WTC11 (cell line): ENCODE measurements at regions of chr11 and their contacts with region 1.

Region 1: GRCh38 chr11:75450826-75451821 is 18.1 kb upstream of the KLHL35 start:
- DNase-seq: peak; percentile 90
- ATAC-seq: peak; percentile 87
- H3K4me3 Mint-ChIP-seq: peak overlapping the region; percentile 46
- H3K27ac Mint-ChIP-seq: no peak overlapping the region
- H3K4me1 Mint-ChIP-seq: no peaks in the 10 kb centered on the region
- H3K27me3 Mint-ChIP-seq: peaks cover 4% of the 10 kb centered on the region
- CTCF ChIP-seq: peak; percentile 94

Region 2: DNA sequence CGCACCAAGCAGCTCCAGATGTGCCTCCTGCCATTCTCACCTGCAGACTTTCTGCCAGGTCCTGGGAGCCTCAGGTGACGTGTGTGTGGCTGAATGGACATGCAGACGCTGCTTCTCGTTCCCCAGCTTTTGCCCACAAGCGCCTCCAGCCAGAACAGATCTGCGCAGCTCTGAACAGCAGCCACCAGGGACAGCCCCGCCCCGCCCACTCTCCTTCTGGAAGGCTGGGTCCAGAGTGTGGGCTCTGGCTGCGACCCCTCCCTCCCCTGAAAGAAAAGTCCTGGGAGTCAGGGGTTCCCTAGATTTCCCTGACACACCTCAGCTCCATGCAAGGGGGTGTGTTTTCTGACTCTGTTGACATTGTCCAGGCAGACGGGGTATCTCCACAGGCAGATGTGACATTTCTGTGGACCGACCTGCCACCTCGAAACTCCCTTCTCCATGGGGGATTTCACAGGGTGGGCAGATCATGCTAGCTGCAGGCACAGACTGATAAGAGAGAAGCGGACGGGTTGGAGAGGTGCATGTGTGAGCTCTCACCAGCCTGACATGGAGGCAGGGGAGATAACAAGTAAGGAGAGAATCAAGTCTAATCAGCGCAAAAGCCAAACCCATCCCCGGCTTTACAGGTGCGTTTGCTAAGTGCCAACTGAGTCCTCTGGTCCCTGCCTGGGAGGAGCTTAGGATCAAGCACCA is 280.5 kb before region 1 on chr11:
- CTCF ChIA-PET with region 1: no interaction called
- POLR2A ChIA-PET with region 1: no interaction called
- DNase-seq: no peak
- ATAC-seq: no peak
- H3K4me3 Mint-ChIP-seq: no peak overlapping the region
- H3K27ac Mint-ChIP-seq: no peak overlapping the region
- H3K4me1 Mint-ChIP-seq: peaks cover 11% of the 10 kb centered on the region
- H3K27me3 Mint-ChIP-seq: no peaks in the 10 kb centered on the region
- CTCF ChIP-seq: no peak

Region 3: GRCh38 chr11:75432164-75432525 is 19.0 kb before region 1 on chr11:
- CTCF ChIA-PET with region 1: interaction called, 24 read pairs
- POLR2A ChIA-PET with region 1: no interaction called
- DNase-seq: peak; percentile 36
- ATAC-seq: 0 out of 2 replicates have a peak, but pooled peaks have one; percentile 3
- H3K4me3 Mint-ChIP-seq: peak overlapping the region; percentile 51
- H3K27ac Mint-ChIP-seq: no peak overlapping the region
- H3K4me1 Mint-ChIP-seq: peaks cover 30% of the 10 kb centered on the region
- H3K27me3 Mint-ChIP-seq: peaks cover 63% of the 10 kb centered on the region
- CTCF ChIP-seq: no peak

Region 4: GRCh38 chr11:75468534-75469340 is 17.6 kb after region 1 on chr11:
- CTCF ChIA-PET with region 1: interaction called, 34 read pairs
- POLR2A ChIA-PET with region 1: no interaction called
- DNase-seq: no peak
- ATAC-seq: no peak
- H3K4me3 Mint-ChIP-seq: no peak overlapping the region
- H3K27ac Mint-ChIP-seq: no peak overlapping the region
- H3K4me1 Mint-ChIP-seq: peaks cover 28% of the 10 kb centered on the region
- H3K27me3 Mint-ChIP-seq: no peaks in the 10 kb centered on the region
- CTCF ChIP-seq: no peak

Region 5: DNA sequence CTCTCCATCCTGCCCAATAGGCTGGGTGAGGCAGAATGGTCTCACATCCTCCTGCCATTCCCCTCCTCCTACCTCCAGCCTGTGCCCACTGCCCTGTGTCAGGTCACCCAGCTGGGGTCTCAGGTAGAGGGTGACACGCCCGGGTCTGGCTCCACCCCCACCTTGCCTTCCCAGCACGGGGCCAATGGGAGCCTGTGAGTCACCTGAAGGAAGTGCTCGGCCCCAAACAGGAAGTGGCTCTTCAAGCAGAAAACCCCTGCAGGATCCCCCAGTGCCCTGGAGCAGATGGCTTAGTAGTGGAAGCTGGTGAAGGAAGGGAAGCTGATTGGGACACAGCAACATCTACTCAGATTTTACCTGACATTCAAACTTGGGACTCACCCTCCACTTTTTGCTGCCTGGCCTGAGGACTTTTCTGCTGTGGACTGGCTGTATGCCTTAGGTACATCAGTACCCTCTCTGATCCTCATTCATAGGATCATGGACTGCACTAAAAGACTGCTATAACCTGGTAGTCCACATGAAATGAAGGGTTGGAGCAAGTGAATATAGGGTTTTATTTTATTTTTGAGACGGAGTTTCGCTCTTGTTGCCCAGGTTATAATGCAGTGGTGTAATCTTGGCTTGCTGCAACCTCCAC is 41.2 kb after region 1 on chr11:
- CTCF ChIA-PET with region 1: interaction called, 40 read pairs
- POLR2A ChIA-PET with region 1: no interaction called
- DNase-seq: peak; percentile 32
- ATAC-seq: peak; percentile 64
- H3K4me3 Mint-ChIP-seq: no peak overlapping the region
- H3K27ac Mint-ChIP-seq: no peak overlapping the region
- H3K4me1 Mint-ChIP-seq: peaks cover 24% of the 10 kb centered on the region
- H3K27me3 Mint-ChIP-seq: no peaks in the 10 kb centered on the region
- CTCF ChIP-seq: no peak

Region 6: DNA sequence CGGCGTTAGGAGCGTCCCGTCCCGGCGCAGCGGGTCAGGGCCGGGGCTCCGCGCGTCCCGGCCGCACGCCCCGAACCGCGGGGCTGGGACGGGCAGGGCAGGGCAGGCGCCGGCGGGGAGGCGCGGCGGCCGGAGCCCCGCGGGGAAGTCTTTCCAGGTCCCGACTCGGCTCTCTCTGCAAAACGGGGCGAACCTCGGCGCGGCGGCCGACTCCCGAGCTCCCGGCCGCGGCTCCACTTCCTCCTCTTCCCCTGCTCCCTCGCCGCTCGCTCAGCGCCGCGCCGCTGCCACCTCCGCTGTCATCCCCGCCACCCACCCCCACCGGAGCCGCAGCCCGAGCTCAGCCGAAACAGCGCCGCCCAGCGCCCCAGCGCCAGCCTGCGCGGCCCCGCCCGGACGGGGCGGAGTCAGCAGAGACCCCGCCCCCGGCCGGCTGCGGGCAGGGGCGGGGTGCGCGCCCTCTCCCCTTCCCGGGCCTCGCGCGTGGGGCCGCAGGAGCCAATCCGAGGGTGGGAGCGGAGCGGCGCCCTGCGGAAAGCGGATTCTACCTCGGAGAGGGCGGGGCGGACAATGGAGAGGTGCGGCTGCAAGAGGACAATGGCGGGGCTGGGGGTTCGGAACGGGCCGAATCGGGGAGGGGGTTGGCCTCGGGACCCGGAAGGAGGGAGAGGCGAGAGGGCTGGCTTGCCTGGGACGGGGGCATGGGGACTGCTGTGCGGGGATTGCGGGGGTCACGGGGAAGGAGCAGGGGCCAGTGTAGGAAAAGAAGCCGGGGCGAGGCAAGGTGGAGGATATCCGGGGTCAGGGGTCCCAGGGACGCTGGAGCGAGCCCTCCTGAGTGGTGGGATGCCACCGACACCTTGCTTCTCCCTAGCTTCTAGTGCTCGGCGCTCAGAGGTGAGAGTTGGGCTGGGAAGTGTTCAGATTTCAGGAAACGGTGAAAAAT is 74.7 kb after region 1 on chr11 and contains the start of gene GDPD5:
- CTCF ChIA-PET with region 1: interaction called, 69 read pairs
- POLR2A ChIA-PET with region 1: interaction called, 3 read pairs
- DNase-seq: peak; percentile 85
- ATAC-seq: peak; percentile 87
- H3K4me3 Mint-ChIP-seq: peak within 1 kb of the TSS; percentile 86
- H3K27ac Mint-ChIP-seq: no peak within 1 kb of the TSS
- H3K4me1 Mint-ChIP-seq: peaks cover 11% of the 10 kb centered on the region
- H3K27me3 Mint-ChIP-seq: peaks cover 39% of the 10 kb centered on the region
- CTCF ChIP-seq: no peak
- total RNA-seq, gene GDPD5: 4.7 to 12.2 TPM (median 5.3 TPM) in 3 replicates

Region 7: GRCh38 chr11:75562048-75562835 is 111.1 kb after region 1 on chr11 and contains the start of gene SERPINH1:
- CTCF ChIA-PET with region 1: interaction called, 10 read pairs
- POLR2A ChIA-PET with region 1: interaction called, 4 read pairs
- DNase-seq: peak; percentile 78
- ATAC-seq: peak; percentile 58
- H3K4me3 Mint-ChIP-seq: peak within 1 kb of the TSS; percentile 96
- H3K27ac Mint-ChIP-seq: peak within 1 kb of the TSS; percentile 99
- H3K4me1 Mint-ChIP-seq: peaks cover 74% of the 10 kb centered on the region
- H3K27me3 Mint-ChIP-seq: no peaks in the 10 kb centered on the region
- CTCF ChIP-seq: no peak
- total RNA-seq, gene SERPINH1: 411 to 478 TPM (median 473 TPM) in 3 replicates

Region 8: GRCh38 chr11:75615706-75616105 is 164.6 kb after region 1 on chr11:
- CTCF ChIA-PET with region 1: no interaction called
- POLR2A ChIA-PET with region 1: no interaction called
- DNase-seq: no peak
- ATAC-seq: no peak
- H3K4me3 Mint-ChIP-seq: no peak overlapping the region
- H3K27ac Mint-ChIP-seq: no peak overlapping the region
- H3K4me1 Mint-ChIP-seq: peaks cover 13% of the 10 kb centered on the region
- H3K27me3 Mint-ChIP-seq: no peaks in the 10 kb centered on the region; the same call in 1 of the 2 replicates
- CTCF ChIP-seq: no peak